ENCODE measurements at regions of chr19 and their contacts with region 1.

Region 1: GRCh38 chr19:33373701-33374421 is at the start of gene CEBPG:
- DNase-seq: peak in 1 of 2 experiments; percentile 59
- H3K4me3 ChIP-seq: peak within 1 kb of the TSS; percentile 73 to 99 (median 83)
- H3K27ac ChIP-seq: peak within 1 kb of the TSS; percentile 73; the same call in 1 of the 2 replicates
- H3K4me1 ChIP-seq: peaks cover 4 to 9% (median 4%) of the 10 kb centered on the region in 4 experiments; a peak in 4 of 7 replicates
- H3K27me3 ChIP-seq: no peaks in the 10 kb centered on the region
- CTCF ChIP-seq: peak in 2 of 3 experiments; percentile 2 to 9; a peak in 3 of 4 replicates
- EP300 ChIP-seq: no peak
- POLR2A ChIP-seq: peak; percentile 74 to 79; a peak in 2 of 3 replicates
- RAD21 ChIP-seq: no peak
- total RNA-seq, gene CEBPG: 32.7 and 35.4 TPM in 2 replicates

Region 2: DNA sequence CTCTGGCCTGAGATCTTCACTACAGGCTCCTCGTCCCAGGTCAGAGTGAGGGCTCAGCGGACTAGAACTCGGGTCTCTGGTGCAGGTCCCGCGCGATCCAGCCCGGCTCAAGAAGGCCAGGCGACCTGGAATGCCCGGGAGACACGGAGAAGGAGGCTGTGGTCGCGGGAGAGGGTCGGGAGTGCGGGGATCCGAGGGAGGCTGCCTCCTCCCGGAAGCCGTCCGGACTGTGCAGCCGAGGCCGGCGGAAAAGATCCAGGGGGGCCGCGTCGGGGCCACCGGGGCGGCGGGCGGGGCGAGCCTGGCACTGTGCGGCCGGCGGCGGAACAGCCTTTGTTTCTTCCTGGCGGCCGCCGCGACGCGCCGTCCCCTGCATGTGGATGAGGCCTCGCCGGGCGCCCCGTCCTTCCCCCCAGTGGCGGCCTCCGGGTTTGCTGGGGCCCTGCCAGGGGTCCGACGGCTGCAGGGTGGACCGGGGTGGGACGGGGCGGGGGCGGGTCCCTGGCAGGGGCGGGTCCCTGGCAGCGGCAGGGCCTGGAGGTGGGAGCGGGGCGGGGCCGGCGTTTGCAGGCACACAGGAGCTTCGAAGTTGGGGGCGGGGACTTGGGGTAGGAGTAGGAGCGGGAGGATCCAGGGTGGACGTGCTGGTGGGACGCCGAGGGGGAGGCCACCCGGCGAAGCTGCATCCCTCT is 147.2 kb before region 1 on chr19:
- CTCF ChIA-PET with region 1: no interaction called
- POLR2A ChIA-PET with region 1: interaction called, 10 read pairs
- DNase-seq: peak; percentile 59 to 87
- H3K4me3 ChIP-seq: peak overlapping the region; percentile 31 to 62 (median 41)
- H3K27ac ChIP-seq: no peak overlapping the region
- H3K4me1 ChIP-seq: peaks cover 0 to 9% (median 6%) of the 10 kb centered on the region in 4 experiments; a peak in 5 of 7 replicates
- H3K27me3 ChIP-seq: peaks cover 16 to 33% (median 30%) of the 10 kb centered on the region in 4 experiments
- CTCF ChIP-seq: no peak
- EP300 ChIP-seq: no peak
- POLR2A ChIP-seq: peak in 1 of 2 experiments; percentile 46; a peak in 1 of 3 replicates
- RAD21 ChIP-seq: no peak

Region 3: DNA sequence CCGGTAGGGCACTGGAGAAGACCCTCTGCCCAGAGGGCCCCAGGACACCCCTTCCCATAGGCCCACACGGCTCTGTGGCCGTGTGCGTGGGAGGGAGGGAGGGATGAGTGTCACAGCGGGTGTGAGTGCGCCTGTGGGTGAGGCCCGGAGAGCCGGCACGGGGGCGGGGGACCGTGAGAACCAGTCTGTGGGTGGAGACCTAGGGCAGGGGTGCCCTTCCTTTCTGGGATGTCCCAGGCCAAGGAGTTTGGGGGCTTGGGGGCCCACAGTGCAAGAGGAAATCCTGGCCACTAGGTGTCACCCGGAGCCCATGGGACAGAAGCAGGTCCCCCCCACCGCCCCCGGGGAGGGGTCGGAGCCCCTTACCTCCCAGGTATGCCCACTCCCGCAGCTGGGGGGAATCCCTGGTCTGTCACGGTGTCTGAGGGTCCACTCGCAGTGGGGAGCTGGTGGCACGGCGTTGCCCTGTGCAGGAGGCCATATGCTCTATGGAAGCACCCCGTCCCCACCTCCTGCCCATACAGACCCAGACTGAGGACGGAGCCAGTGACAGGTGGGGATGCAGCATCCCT is 132.2 kb before region 1 on chr19:
- CTCF ChIA-PET with region 1: interaction called, 7 read pairs
- POLR2A ChIA-PET with region 1: interaction called, 13 read pairs
- DNase-seq: peak in 1 of 2 experiments; percentile 72
- H3K4me3 ChIP-seq: no peak overlapping the region
- H3K27ac ChIP-seq: no peak overlapping the region
- H3K4me1 ChIP-seq: no peaks in the 10 kb centered on the region
- H3K27me3 ChIP-seq: no peaks in the 10 kb centered on the region; a peak in 1 of 7 replicates
- CTCF ChIP-seq: peak; percentile 63 to 72 (median 64)
- EP300 ChIP-seq: no peak
- POLR2A ChIP-seq: no peak
- RAD21 ChIP-seq: peak; percentile 85

Region 4: DNA sequence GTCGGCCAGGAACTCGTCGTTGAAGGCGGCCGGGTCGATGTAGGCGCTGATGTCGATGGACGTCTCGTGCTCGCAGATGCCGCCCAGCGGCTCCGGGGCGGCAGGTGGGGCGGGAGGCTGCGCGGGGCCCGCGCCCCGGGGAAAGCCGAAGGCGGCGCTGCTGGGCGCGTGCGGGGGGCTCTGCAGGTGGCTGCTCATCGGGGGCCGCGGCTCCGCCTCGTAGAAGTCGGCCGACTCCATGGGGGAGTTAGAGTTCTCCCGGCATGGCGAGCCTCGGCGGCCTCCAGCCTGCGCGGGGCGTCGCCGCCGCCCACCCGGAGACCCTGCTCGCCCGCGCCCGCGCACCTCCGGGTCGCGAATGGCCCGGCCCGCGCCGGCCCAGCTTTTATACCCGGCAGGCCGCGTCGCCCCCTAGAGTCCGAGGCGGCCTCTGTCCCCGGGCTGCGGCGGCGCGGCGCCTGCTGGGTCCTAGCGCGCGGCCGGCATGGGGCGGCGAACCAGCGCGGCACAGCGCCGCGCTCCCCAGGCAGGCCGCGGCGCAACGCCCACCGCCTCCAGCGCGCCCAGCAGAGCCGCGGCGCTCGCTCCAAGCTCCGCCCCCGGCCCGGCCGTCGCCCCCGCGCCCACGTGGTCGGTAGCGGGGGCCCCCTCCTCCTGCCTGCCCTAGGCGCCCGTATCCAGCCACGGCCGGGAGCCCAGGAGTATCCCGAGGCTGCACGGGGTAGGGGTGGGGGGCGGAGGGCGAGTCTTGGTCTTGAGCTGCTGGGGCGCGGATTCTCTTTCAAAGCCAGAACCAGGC is 71.5 kb before region 1 on chr19 and contains the start of gene CEBPA:
- CTCF ChIA-PET with region 1: interaction called, 5 read pairs
- POLR2A ChIA-PET with region 1: interaction called, 48 read pairs
- DNase-seq: peak; percentile 58 to 84
- H3K4me3 ChIP-seq: peak within 1 kb of the TSS; percentile 56 to 70 (median 61)
- H3K27ac ChIP-seq: no peak within 1 kb of the TSS; the same call in 1 of the 2 replicates
- H3K4me1 ChIP-seq: peaks cover 3 to 16% (median 12%) of the 10 kb centered on the region in 4 experiments
- H3K27me3 ChIP-seq: peaks cover 20 to 53% (median 44%) of the 10 kb centered on the region in 4 experiments
- CTCF ChIP-seq: peak; percentile 55 to 66 (median 63)
- EP300 ChIP-seq: 0 out of 3 replicates have a peak, but pooled peaks of 1 of the 2 experiments have one; percentile 16
- POLR2A ChIP-seq: peak in 1 of 2 experiments; percentile 98; a peak in 2 of 3 replicates
- RAD21 ChIP-seq: peak; percentile 0 to 46; a peak in 2 of 4 replicates
- total RNA-seq, gene CEBPA: 2.7 and 3.0 TPM in 2 replicates

Region 5: DNA sequence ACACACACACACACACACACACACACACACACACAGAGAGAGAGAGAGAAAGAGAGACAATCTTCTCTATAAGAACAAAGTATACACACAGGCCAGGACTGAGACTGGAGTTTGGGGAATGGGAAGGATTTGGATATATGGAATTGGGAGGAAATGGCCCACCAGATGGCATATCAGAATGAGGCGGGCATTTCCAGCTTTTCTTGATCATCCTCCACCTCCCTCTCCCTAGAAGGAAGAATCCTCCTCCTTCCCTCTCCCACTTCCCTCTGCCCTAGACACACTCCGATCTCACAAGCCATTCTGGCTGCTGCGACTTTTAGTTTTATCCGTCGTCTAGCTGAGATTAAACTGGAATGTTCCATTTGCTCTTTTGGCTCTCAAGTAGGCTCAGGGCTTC is 10.4 kb before region 1 on chr19:
- CTCF ChIA-PET with region 1: interaction called, 6 read pairs
- POLR2A ChIA-PET with region 1: interaction called, 44 read pairs
- DNase-seq: no peak
- H3K4me3 ChIP-seq: no peak overlapping the region
- H3K27ac ChIP-seq: no peak overlapping the region
- H3K4me1 ChIP-seq: no peaks in the 10 kb centered on the region
- H3K27me3 ChIP-seq: no peaks in the 10 kb centered on the region; a peak in 1 of 7 replicates
- CTCF ChIP-seq: no peak
- EP300 ChIP-seq: no peak
- POLR2A ChIP-seq: no peak
- RAD21 ChIP-seq: no peak

Region 6: GRCh38 chr19:33496038-33496895 is 122.4 kb after region 1 on chr19:
- CTCF ChIA-PET with region 1: no interaction called
- POLR2A ChIA-PET with region 1: no interaction called
- DNase-seq: no peak
- H3K4me3 ChIP-seq: no peak overlapping the region
- H3K27ac ChIP-seq: no peak overlapping the region
- H3K4me1 ChIP-seq: no peaks in the 10 kb centered on the region; a peak in 1 of 7 replicates
- H3K27me3 ChIP-seq: no peaks in the 10 kb centered on the region
- CTCF ChIP-seq: no peak
- EP300 ChIP-seq: no peak
- POLR2A ChIP-seq: no peak
- RAD21 ChIP-seq: no peak

Measured in H1 (cell line).